CD8-positive, alpha-beta memory T cell (primary cell): ENCODE measurements at regions of chr2 and their contacts with region 1.

Region 1: DNA sequence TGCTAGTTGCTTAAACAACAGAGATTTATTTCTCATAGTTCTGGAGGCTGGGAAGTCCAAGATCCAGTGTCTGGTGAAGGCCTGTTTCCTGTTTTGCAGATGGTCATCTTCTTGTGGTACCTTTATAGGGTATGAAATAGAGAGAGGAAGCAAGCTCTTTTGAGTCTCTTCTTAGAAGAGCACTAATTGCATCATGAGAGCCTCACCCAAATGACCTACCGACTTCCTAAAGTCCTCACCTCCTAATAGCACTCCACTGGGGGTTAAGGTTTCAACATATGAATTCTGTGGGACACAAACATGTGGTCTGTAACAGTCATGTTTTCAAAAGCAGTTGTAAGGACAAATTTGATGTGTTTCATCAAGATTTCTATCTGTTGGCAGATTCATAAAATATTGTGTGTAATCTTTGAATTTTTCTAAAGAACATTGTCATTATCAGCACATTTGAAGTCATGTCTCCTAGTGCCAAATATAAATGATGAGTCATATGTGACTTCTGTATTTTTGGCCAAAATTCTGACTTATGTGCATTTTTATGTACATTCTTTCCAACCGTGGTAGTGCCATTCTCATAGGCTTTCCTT is 45.3 kb downstream of the CD28 start:
- DNase-seq: no peak
- H3K4me3 ChIP-seq: no peak overlapping the region
- H3K4me3 Mint-ChIP-seq: peak overlapping the region in 2 of 7 donors; percentile 19 to 52
- H3K27ac ChIP-seq: no peak overlapping the region
- H3K27ac Mint-ChIP-seq: peak overlapping the region in 4 of 8 donors; percentile 30 to 47 (median 43)
- H3K4me1 ChIP-seq: peaks cover 21% of the 10 kb centered on the region
- H3K4me1 Mint-ChIP-seq: peaks cover 45 to 60% (median 56%) of the 10 kb centered on the region in 3 donors
- H3K27me3 ChIP-seq: no peaks in the 10 kb centered on the region
- H3K27me3 Mint-ChIP-seq: no peaks in the 10 kb centered on the region

Region 2: GRCh38 chr2:203740780-203741281 is 10.9 kb before region 1 on chr2:
- CTCF ChIA-PET with region 1: interaction called, 8 read pairs
- POLR2A ChIA-PET with region 1: interaction called, 14 read pairs
- DNase-seq: peak in 3 of 5 donors; percentile 59 to 85 (median 77)
- H3K4me3 ChIP-seq: peak overlapping the region; percentile 29
- H3K4me3 Mint-ChIP-seq: peak overlapping the region; percentile 7 to 75 (median 65)
- H3K27ac ChIP-seq: peak overlapping the region; percentile 52
- H3K27ac Mint-ChIP-seq: peak overlapping the region; percentile 79 to 97 (median 93)
- H3K4me1 ChIP-seq: peaks cover 81% of the 10 kb centered on the region
- H3K4me1 Mint-ChIP-seq: peaks cover 71 to 90% (median 82%) of the 10 kb centered on the region in 3 donors
- H3K27me3 ChIP-seq: no peaks in the 10 kb centered on the region
- H3K27me3 Mint-ChIP-seq: no peaks in the 10 kb centered on the region